ENCODE measurements at regions of chr2 and their contacts with region 1.

Region 1: GRCh38 chr2:240861554-240861953 is 7.1 kb upstream of the AGXT start:
- DNase-seq: no peak
- ATAC-seq: no peak
- H3K4me3 Mint-ChIP-seq: no peak overlapping the region
- H3K27ac Mint-ChIP-seq: no peak overlapping the region
- H3K4me1 Mint-ChIP-seq: no peaks in the 10 kb centered on the region
- H3K27me3 Mint-ChIP-seq: peaks cover 4% of the 10 kb centered on the region
- CTCF ChIP-seq: no peak

Region 2: GRCh38 chr2:240851078-240851991 is 10.2 kb before region 1 on chr2:
- CTCF ChIA-PET with region 1: interaction called, 23 read pairs
- POLR2A ChIA-PET with region 1: no interaction called
- intact Hi-C with region 1: no loop called
- DNase-seq: peak; percentile 90
- ATAC-seq: peak; percentile 89
- H3K4me3 Mint-ChIP-seq: no peak overlapping the region
- H3K27ac Mint-ChIP-seq: no peak overlapping the region
- H3K4me1 Mint-ChIP-seq: no peaks in the 10 kb centered on the region
- H3K27me3 Mint-ChIP-seq: no peaks in the 10 kb centered on the region
- CTCF ChIP-seq: peak; percentile 93

Region 3: DNA sequence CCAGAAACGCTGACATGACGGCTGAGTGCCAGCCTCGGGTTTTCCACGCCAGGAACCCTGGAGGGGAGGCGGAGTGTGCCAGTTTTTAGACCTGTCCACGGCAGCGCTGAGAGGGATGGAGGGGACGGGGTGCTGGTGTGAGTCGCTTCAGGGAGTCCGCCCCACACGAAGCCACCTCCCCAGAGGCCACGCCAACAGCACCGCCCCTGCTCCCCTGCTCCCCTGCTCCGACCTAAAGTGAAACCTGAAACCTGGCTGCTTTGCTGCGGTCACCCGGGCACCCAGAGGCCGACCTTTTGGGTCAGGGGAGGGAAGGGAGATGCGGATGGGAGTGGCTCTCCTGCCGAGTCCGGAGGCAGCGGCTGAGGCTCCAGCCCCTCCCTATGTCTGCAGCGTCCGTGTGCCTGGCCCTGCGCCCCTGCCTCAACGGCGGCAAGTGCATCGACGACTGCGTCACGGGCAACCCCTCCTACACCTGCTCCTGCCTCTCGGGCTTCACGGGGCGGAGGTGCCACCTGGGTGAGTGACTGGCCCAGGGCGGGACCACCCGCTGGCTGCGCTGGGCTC is 174.9 kb after region 1 on chr2:
- CTCF ChIA-PET with region 1: no interaction called
- POLR2A ChIA-PET with region 1: no interaction called
- intact Hi-C with region 1: no loop called
- DNase-seq: peak; percentile 75
- ATAC-seq: peak; percentile 88
- H3K4me3 Mint-ChIP-seq: peak overlapping the region; percentile 67
- H3K27ac Mint-ChIP-seq: peak overlapping the region; percentile 49
- H3K4me1 Mint-ChIP-seq: peaks cover 9% of the 10 kb centered on the region
- H3K27me3 Mint-ChIP-seq: no peaks in the 10 kb centered on the region
- CTCF ChIP-seq: no peak

Region 4: GRCh38 chr2:241069821-241070281 is 208.3 kb after region 1 on chr2:
- CTCF ChIA-PET with region 1: no interaction called
- POLR2A ChIA-PET with region 1: no interaction called
- intact Hi-C with region 1: loop called (anchors 5 kb)
- DNase-seq: no peak
- ATAC-seq: no peak
- H3K4me3 Mint-ChIP-seq: no peak overlapping the region
- H3K27ac Mint-ChIP-seq: no peak overlapping the region
- H3K4me1 Mint-ChIP-seq: no peaks in the 10 kb centered on the region
- H3K27me3 Mint-ChIP-seq: no peaks in the 10 kb centered on the region
- CTCF ChIP-seq: no peak